ENCODE measurements at regions of chr6 and their contacts with region 1.

Region 1: DNA sequence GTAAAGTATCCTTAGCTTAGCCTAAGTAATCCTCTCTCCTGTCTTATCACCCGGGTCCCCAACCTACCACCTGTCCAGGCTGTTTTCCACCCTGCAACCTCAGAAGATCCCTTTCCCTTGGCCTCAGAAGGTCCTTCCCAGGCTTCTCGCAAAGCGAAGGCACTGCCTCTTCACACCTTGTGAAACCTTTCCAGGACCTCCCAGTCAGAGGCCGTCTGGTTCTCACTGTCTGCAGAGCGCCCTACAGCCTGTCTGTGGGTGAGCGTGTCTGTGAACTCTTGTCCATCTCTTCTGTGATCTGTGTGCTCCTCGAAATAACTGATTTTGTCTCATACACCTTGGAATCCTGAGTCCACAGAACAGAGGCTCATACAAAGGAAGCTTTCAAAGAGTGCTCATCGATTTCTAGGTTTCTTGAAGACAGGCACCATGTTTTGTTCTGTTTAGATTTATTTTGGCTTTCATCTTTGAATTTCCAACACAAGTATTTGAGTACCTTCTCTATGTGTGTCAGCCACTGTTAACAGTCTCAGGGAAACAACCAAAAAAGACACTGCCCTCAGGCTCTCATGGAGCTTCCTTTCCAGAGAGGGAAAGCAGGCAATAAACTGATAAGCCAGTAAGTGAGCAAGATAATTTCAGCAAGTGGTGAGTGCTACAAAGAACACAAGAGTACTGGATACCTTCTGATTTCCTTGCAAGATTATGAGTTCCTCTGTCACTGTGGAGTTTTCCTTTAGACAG is 6.3 kb downstream of the PDE10A start:
- DNase-seq: no peak
- H3K4me3 ChIP-seq: no peak overlapping the region
- H3K27ac ChIP-seq: no peak overlapping the region
- H3K27me3 ChIP-seq: peaks cover 18% of the 10 kb centered on the region
- CTCF ChIP-seq: no peak

Region 2: GRCh38 chr6:165636402-165637048 is 20.2 kb before region 1 on chr6:
- CTCF ChIA-PET with region 1: no interaction called
- POLR2A ChIA-PET with region 1: interaction called, 10 read pairs
- DNase-seq: no peak
- H3K4me3 ChIP-seq: no peak overlapping the region
- H3K27ac ChIP-seq: no peak overlapping the region
- H3K27me3 ChIP-seq: no peaks in the 10 kb centered on the region
- CTCF ChIP-seq: no peak